Right ventricle myocardium superior (tissue), 1 donor: ENCODE measurements at regions of chr13 and their contacts with region 1.

Region 1: GRCh38 chr13:40682449-40683240 is 16.2 kb upstream of the FOXO1 start:
- DNase-seq: no peak
- ATAC-seq: peak; percentile 44

Region 2: GRCh38 chr13:39692660-39693438 is 989.8 kb before region 1 on chr13:
- intact Hi-C with region 1: loop called (anchors 10 kb)
- DNase-seq: no peak
- ATAC-seq: no peak

Region 3: GRCh38 chr13:40069173-40070044 is 613.2 kb before region 1 on chr13:
- intact Hi-C with region 1: loop called (anchors 2 kb)
- DNase-seq: peak; percentile 79
- ATAC-seq: peak; percentile 97

Region 4: GRCh38 chr13:40485611-40486517 is 196.8 kb before region 1 on chr13:
- intact Hi-C with region 1: no loop called
- DNase-seq: no peak
- ATAC-seq: no peak